CD4-positive, alpha-beta T cell (primary cell): ENCODE measurements at regions of chr17 and their contacts with region 1.

Region 1: GRCh38 chr17:8965394-8966168 is at the start of gene PIK3R5:
- DNase-seq: peak; percentile 67 to 91 (median 84)
- ATAC-seq: peak; percentile 73
- H3K4me3 ChIP-seq: peak within 1 kb of the TSS; percentile 99
- H3K4me3 Mint-ChIP-seq: peak within 1 kb of the TSS; percentile 95
- H3K27ac ChIP-seq: peak within 1 kb of the TSS; percentile 77 to 83
- H3K27ac Mint-ChIP-seq: peak within 1 kb of the TSS; percentile 90
- H3K4me1 ChIP-seq: peaks cover 51% of the 10 kb centered on the region
- H3K4me1 Mint-ChIP-seq: peaks cover 47% of the 10 kb centered on the region
- H3K27me3 ChIP-seq: no peaks in the 10 kb centered on the region
- H3K27me3 Mint-ChIP-seq: no peaks in the 10 kb centered on the region
- CTCF ChIP-seq: peak; percentile 36
- total RNA-seq, gene PIK3R5: 153 to 159 TPM

Region 2: DNA sequence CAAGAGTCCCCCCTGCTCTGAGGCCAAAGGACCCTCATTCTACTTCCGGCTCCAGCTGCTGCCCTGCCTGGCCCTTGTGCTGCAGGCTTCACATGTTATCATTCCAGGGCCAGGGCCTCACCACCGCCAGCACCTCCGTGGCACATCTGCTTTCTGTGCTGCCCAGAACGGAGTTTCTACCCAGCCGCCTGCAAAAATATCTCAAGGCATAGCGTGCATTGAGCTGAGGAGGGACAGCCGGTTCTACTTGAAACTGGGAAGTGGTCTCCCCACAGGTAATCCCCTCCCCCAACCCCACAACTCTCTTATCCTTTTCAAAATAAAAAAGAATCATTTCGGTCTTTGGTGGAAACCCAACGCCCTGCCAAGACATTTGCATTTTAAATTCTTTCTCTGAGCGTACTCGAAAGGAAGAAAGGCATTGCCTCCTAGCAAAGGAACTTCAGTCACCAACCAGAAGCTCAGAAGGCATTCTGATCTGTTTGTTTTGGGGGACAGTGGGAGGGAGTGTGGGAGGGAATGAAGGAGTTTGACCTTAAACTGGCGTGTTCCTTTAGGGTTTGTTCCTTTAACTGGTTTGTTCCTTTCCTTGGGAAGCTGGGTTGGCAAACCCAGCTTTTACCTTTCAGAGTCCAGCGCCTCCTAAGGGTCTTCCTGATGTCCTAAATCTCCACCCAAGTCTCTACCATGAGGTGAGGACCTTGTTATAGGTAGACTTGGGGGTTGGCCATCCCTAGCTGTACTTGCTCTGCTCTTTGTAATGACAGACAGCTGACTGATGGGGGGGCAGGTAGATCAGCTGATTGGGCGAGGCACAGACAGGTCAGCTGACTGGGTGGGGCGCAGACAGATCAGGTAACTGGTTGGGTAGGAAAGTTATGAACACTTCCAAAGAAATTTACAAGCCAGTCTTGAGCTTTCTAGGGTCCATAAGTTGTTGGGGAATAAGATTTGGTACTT is 64.7 kb before region 1 on chr17:
- CTCF ChIA-PET with region 1: interaction called, 5 read pairs
- POLR2A ChIA-PET with region 1: interaction called, 46 read pairs
- intact Hi-C with region 1: loop called (anchors 1 to 2 kb)
- DNase-seq: peak in 6 of 14 experiments; percentile 29 to 65 (median 45)
- ATAC-seq: no peak
- H3K4me3 ChIP-seq: no peak overlapping the region
- H3K4me3 Mint-ChIP-seq: peak overlapping the region; percentile 9
- H3K27ac ChIP-seq: peak overlapping the region; percentile 39 to 54
- H3K27ac Mint-ChIP-seq: peak overlapping the region; percentile 93
- H3K4me1 ChIP-seq: peaks cover 63% of the 10 kb centered on the region
- H3K4me1 Mint-ChIP-seq: peaks cover 61% of the 10 kb centered on the region
- H3K27me3 ChIP-seq: no peaks in the 10 kb centered on the region
- H3K27me3 Mint-ChIP-seq: no peaks in the 10 kb centered on the region
- CTCF ChIP-seq: no peak

Region 3: GRCh38 chr17:8922451-8922850 is 43.1 kb before region 1 on chr17:
- CTCF ChIA-PET with region 1: no interaction called
- POLR2A ChIA-PET with region 1: no interaction called
- intact Hi-C with region 1: loop called in 1 of 2 experiments (anchors 5 kb)
- DNase-seq: peak in 2 of 14 experiments; percentile 60 to 70
- ATAC-seq: no peak
- H3K4me3 ChIP-seq: no peak overlapping the region
- H3K4me3 Mint-ChIP-seq: no peak overlapping the region
- H3K27ac ChIP-seq: no peak overlapping the region
- H3K27ac Mint-ChIP-seq: peak overlapping the region; percentile 13
- H3K4me1 ChIP-seq: peaks cover 28% of the 10 kb centered on the region
- H3K4me1 Mint-ChIP-seq: peaks cover 29% of the 10 kb centered on the region
- H3K27me3 ChIP-seq: no peaks in the 10 kb centered on the region
- H3K27me3 Mint-ChIP-seq: no peaks in the 10 kb centered on the region
- CTCF ChIP-seq: no peak

Region 4: GRCh38 chr17:8934346-8934745 is 31.2 kb before region 1 on chr17:
- CTCF ChIA-PET with region 1: no interaction called
- POLR2A ChIA-PET with region 1: interaction called, 66 read pairs
- intact Hi-C with region 1: loop called in 1 of 2 experiments (anchors 5 kb)
- DNase-seq: peak in 1 of 14 experiments; percentile 14
- ATAC-seq: no peak
- H3K4me3 ChIP-seq: no peak overlapping the region
- H3K4me3 Mint-ChIP-seq: no peak overlapping the region
- H3K27ac ChIP-seq: peak overlapping the region in 1 of 2 donors; percentile 50
- H3K27ac Mint-ChIP-seq: peak overlapping the region; percentile 67
- H3K4me1 ChIP-seq: peaks cover 26% of the 10 kb centered on the region
- H3K4me1 Mint-ChIP-seq: peaks cover 82% of the 10 kb centered on the region
- H3K27me3 ChIP-seq: no peaks in the 10 kb centered on the region
- H3K27me3 Mint-ChIP-seq: no peaks in the 10 kb centered on the region
- CTCF ChIP-seq: no peak

Region 5: GRCh38 chr17:8941520-8941919 is 24.1 kb before region 1 on chr17:
- CTCF ChIA-PET with region 1: interaction called, 3 read pairs
- POLR2A ChIA-PET with region 1: interaction called, 66 read pairs
- intact Hi-C with region 1: loop called in 1 of 2 experiments (anchors 2 kb)
- DNase-seq: peak; percentile 44 to 88 (median 62)
- ATAC-seq: peak; percentile 63
- H3K4me3 ChIP-seq: peak overlapping the region; percentile 21
- H3K4me3 Mint-ChIP-seq: peak overlapping the region; percentile 56
- H3K27ac ChIP-seq: peak overlapping the region; percentile 44 to 56
- H3K27ac Mint-ChIP-seq: peak overlapping the region; percentile 94
- H3K4me1 ChIP-seq: peaks cover 68% of the 10 kb centered on the region
- H3K4me1 Mint-ChIP-seq: peaks cover 93% of the 10 kb centered on the region
- H3K27me3 ChIP-seq: no peaks in the 10 kb centered on the region
- H3K27me3 Mint-ChIP-seq: no peaks in the 10 kb centered on the region
- CTCF ChIP-seq: no peak

Region 6: DNA sequence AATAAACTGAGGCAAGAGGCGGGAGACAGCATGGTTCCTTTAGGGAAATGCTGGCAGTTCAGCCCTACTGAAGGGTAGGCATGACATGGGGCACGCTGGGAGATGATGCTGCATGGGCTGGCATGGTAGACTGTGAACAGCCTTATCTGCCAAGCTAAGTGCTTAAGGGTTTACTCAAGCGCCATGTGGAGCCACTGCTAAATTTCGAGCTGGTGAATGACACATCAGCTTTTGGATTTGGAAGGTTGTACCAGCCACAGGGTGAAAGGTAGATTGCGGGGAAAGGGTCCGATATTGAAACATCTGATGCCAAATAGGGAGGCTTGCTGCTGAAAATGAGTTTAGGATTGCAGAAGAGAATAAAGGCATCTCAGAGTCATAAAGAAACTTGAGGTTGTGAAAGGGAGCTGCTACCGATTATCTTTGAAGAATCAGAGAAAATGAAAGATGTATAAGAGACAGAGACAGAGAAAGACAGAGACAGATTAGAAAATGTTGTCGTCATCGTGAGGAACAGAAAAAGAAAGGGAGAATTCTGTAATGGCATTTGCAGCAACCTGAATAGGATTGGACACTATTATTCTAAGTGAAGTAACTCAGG is 16.4 kb before region 1 on chr17:
- CTCF ChIA-PET with region 1: interaction called, 9 read pairs
- POLR2A ChIA-PET with region 1: interaction called, 94 read pairs
- intact Hi-C with region 1: loop called (anchors 1 kb)
- DNase-seq: peak in 1 of 14 experiments; percentile 29
- ATAC-seq: no peak
- H3K4me3 ChIP-seq: no peak overlapping the region
- H3K4me3 Mint-ChIP-seq: peak overlapping the region; percentile 43
- H3K27ac ChIP-seq: peak overlapping the region; percentile 13 to 14
- H3K27ac Mint-ChIP-seq: peak overlapping the region; percentile 92
- H3K4me1 ChIP-seq: peaks cover 72% of the 10 kb centered on the region
- H3K4me1 Mint-ChIP-seq: peaks cover 94% of the 10 kb centered on the region
- H3K27me3 ChIP-seq: no peaks in the 10 kb centered on the region
- H3K27me3 Mint-ChIP-seq: no peaks in the 10 kb centered on the region
- CTCF ChIP-seq: no peak

Region 7: DNA sequence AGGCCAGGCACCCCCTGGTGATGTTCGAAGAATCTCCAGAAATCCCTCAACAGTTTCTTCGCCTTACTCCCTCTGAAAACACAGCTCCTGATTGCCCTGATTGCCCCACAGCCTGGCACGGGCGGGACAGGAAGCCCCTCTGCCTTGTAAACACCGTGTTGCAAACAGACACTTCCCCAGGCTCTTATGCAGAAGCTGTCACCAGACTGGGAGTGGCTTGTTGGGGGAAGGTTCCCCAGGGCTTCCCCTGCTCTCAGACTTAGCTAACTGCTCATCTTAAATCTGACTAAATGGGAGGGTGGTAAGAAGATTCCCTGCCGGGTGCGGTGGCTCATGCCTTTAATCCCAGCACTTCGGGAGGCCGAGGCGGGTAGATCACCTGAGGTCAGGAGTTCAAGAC is 11.2 kb before region 1 on chr17:
- CTCF ChIA-PET with region 1: interaction called, 9 read pairs
- POLR2A ChIA-PET with region 1: interaction called, 94 read pairs
- intact Hi-C with region 1: loop called (anchors 1 kb)
- DNase-seq: peak; percentile 62 to 95 (median 76)
- ATAC-seq: peak; percentile 94
- H3K4me3 ChIP-seq: peak overlapping the region; percentile 19
- H3K4me3 Mint-ChIP-seq: peak overlapping the region; percentile 80
- H3K27ac ChIP-seq: peak overlapping the region; percentile 66 to 77
- H3K27ac Mint-ChIP-seq: peak overlapping the region; percentile 92
- H3K4me1 ChIP-seq: peaks cover 80% of the 10 kb centered on the region
- H3K4me1 Mint-ChIP-seq: peaks cover 94% of the 10 kb centered on the region
- H3K27me3 ChIP-seq: no peaks in the 10 kb centered on the region
- H3K27me3 Mint-ChIP-seq: no peaks in the 10 kb centered on the region
- CTCF ChIP-seq: no peak

Region 8: DNA sequence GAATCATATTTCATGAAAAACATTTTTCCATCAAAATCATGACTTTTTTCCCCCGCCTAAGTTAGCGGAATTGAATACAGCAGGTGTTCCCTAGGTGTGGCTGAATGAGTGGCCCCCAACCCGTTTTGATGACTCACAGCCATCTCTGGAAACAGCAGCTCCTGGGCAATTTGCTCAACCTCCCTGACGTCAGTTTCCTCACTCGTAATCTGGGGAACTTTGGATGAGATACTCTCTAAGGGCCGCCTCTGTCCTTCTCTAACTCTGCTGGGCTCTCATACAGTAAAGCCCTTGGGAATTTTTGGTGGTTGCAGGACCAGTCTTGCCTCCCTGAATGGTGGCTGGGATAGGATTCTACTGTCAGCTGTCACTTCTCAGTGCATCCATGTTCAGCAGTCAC is 44.2 kb after region 1 on chr17:
- CTCF ChIA-PET with region 1: no interaction called
- POLR2A ChIA-PET with region 1: no interaction called
- intact Hi-C with region 1: no loop called
- DNase-seq: no peak
- ATAC-seq: no peak
- H3K4me3 ChIP-seq: no peak overlapping the region
- H3K4me3 Mint-ChIP-seq: no peak overlapping the region
- H3K27ac ChIP-seq: no peak overlapping the region
- H3K27ac Mint-ChIP-seq: no peak overlapping the region
- H3K4me1 ChIP-seq: no peaks in the 10 kb centered on the region
- H3K4me1 Mint-ChIP-seq: peaks cover 5% of the 10 kb centered on the region
- H3K27me3 ChIP-seq: peaks cover 23 to 46% of the 10 kb centered on the region in 2 experiments
- H3K27me3 Mint-ChIP-seq: peaks cover 83% of the 10 kb centered on the region
- CTCF ChIP-seq: no peak